ENCODE measurements at regions of chr10 and their contacts with region 1.

Region 1: GRCh38 chr10:101071267-101071884 is 9.6 kb downstream of the KAZALD1 start:
- DNase-seq: peak; percentile 24
- H3K4me3 ChIP-seq: no peak overlapping the region
- H3K27ac ChIP-seq: no peak overlapping the region
- H3K4me1 ChIP-seq: peaks cover 11 to 20% (median 12%) of the 10 kb centered on the region in 4 donors
- H3K27me3 ChIP-seq: peaks cover 57% of the 10 kb centered on the region
- CTCF ChIP-seq: no peak
- EP300 ChIP-seq: no peak
- POLR2A ChIP-seq: no peak

Region 2: DNA sequence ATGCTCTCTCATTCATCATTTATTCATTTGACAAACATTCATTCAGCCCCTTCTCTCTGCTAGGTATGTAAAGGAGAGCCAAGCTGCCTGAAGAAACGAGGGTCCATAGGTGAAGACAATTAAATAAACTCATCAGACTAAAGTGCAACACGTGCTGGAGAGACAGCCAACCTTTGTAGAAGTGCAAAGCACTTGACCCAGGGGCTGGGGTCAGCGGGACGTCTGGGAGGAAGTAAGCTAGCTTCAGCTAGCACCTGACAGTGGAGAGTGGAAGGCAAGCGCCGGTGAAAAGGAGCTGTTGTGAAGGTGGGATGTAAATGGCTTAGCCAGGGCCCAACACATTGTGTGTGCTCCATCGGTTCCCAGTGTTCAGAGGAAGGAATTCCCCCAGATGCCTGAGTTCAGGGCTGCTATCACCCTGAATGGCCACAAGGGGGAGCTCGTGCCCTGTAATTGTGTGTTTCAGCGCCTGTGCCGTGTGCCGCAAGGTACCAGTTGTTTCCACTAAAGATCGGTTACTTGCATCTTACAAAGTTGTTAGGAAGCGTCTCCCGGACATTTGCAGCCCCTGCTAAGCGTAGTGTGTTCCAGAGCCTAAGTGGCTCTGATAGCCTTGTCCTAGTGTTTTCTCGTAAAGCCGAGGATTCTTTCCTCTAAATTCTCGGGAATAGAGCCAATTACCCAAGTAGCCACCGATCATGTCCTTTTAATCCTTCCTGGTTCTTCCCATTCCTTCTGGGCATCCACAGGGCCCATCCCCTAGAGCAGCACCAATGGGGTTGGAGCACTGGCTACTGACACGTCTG is 90.3 kb after region 1 on chr10:
- in situ Hi-C with region 1: no loop called
- intact Hi-C with region 1: loop called (anchors 1 kb)
- DNase-seq: peak; percentile 72
- H3K4me3 ChIP-seq: peak overlapping the region in 2 of 4 donors; percentile 10 to 17
- H3K27ac ChIP-seq: no peak overlapping the region
- H3K4me1 ChIP-seq: peaks cover 0 to 4% (median 2%) of the 10 kb centered on the region in 4 donors
- H3K27me3 ChIP-seq: peaks cover 88% of the 10 kb centered on the region
- CTCF ChIP-seq: peak; percentile 84 to 98 (median 95)
- EP300 ChIP-seq: no peak
- POLR2A ChIP-seq: no peak